Head of caudate nucleus (tissue), 42 donors: ENCODE measurements at regions of chr4 and their contacts with region 1.

Region 1: GRCh38 chr4:37389967-37390580 is 145.5 kb downstream of the NWD2 start:
- DNase-seq: peak in 15 of 42 donors; percentile 25 to 75 (median 48)

Region 2: GRCh38 chr4:36414248-36414647 is 975.8 kb before region 1 on chr4:
- intact Hi-C with region 1: loop called (anchors 10 kb)
- DNase-seq: no peak

Region 3: DNA sequence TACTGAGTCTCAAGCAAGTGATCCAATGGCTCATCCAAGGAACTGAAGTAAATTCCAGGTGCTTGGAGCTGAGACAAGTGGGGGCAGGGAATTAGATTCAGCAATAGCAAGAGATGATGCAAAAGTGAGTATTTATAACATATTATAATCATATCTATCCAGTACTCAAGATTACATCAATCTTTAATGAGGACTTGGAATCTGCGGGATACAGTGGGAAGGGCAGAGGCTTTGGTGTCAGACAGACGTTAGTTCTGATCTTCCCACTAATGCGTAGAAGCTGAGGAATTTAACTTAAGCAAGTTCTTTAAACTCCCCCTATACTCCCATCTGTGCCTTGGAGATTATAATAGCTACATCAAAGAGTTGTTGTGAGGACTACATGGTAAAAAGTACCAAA is 288.9 kb before region 1 on chr4:
- intact Hi-C with region 1: no loop called
- DNase-seq: no peak

Region 4: GRCh38 chr4:37365888-37366287 is 24.2 kb before region 1 on chr4:
- intact Hi-C with region 1: no loop called
- DNase-seq: no peak

Region 5: GRCh38 chr4:37549041-37549440 is 159.0 kb after region 1 on chr4:
- intact Hi-C with region 1: no loop called
- DNase-seq: no peak